Activated naive CD4-positive, alpha-beta T cell treated with anti-CD3 and anti-CD28 coated beads, Interleukin-2, amount 10 ng/mL, durations not matched to agents 7 days and 5 days (primary cell): ENCODE measurements at regions of chr11 and their contacts with region 1.

Region 1: DNA sequence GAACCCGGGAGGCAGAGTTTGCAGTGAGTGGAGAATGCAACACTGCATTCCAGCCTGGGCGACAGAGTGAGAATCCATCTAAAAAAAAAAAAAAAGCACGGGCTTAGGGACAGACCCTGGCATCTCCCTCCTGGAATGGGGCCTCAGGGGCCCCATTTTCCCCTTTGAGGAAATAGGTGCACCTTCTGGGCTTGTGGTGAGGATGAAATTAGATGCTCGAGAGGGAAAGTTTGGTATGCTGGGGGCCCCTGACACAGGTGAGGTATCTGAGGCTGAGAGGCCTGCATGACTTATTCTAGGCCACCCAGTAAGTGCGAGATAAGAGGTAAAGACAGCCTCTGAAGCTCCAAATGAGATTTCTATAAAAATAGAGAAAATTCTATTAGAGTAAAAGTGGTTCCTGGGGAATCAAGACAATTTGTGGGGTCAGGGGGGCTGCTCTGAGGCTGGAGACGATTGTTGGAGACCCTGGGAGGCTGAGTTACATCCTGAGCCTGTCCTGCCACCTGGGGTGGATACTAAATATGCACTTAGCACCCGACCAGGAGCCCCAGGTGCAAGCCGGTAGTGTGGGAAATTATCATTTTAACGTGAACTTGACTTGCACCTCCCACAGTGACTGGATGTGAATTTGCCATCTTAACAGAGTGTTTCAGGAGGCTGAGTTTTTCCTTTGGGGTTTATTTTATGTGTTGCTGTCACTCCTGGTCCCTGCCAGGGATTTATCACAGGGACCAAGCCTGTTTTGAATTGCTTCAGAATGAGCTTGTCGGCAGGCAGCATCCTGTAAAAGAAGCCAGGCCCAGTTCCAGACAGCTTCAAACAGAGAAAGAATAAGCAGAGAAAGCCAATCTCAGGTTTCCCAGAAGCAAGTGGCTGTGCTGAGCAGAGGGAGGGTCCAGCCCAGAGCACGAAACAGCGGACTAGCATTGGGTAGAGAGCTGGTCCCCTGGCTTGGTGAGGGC is 48.4 kb upstream of the TSKU start:
- DNase-seq: no peak
- H3K4me3 Mint-ChIP-seq: no peak overlapping the region
- H3K27ac Mint-ChIP-seq: no peak overlapping the region
- H3K4me1 Mint-ChIP-seq: peaks cover 6% of the 10 kb centered on the region
- H3K27me3 Mint-ChIP-seq: peaks cover 27% of the 10 kb centered on the region

Region 2: GRCh38 chr11:76670485-76671236 is 64.1 kb before region 1 on chr11 and contains the start of gene LRRC32:
- CTCF ChIA-PET with region 1: no interaction called
- DNase-seq: peak; percentile 39
- H3K4me3 Mint-ChIP-seq: peak within 1 kb of the TSS; percentile 59
- H3K27ac Mint-ChIP-seq: no peak within 1 kb of the TSS
- H3K4me1 Mint-ChIP-seq: peaks cover 29% of the 10 kb centered on the region
- H3K27me3 Mint-ChIP-seq: peaks cover 63% of the 10 kb centered on the region

Region 3: GRCh38 chr11:76799066-76799804 is 64.5 kb after region 1 on chr11:
- CTCF ChIA-PET with region 1: interaction called, 151 read pairs
- DNase-seq: peak; percentile 83
- H3K4me3 Mint-ChIP-seq: peak overlapping the region; percentile 18
- H3K27ac Mint-ChIP-seq: no peak overlapping the region
- H3K4me1 Mint-ChIP-seq: peaks cover 25% of the 10 kb centered on the region
- H3K27me3 Mint-ChIP-seq: peaks cover 49% of the 10 kb centered on the region

Region 4: DNA sequence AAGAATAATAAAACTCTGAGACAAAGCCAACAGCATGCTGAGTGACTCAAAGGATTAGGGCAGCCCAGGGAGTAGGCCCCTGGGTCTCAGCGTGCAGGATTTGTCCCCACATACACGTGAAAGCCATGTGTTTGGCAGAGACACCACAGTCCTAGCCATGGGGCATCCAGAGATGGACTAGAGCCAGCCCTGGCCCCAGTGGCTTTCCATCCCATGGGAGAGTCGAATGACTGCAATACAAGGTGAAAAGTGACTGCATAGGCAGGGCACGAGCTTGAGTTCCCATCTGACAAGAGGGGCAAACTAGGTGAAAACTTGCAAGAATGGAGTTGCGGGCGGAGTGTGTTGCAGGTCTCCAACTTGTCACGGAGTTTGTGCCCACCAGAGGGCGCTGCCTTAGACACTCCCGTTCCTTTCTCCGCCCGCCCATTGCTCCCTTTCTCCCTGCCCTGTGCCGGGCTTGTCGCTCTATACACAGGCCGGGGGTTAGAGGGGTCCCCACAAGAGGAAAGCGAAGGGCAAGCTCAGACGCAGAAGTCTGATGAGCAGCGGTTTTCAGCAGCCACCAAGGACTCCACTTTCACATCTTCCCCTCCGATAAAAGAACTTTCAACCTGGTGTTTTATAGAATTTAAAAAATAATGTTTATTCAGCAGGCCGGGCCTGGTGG is 72.6 kb after region 1 on chr11:
- CTCF ChIA-PET with region 1: interaction called, 151 read pairs
- DNase-seq: peak; percentile 81
- H3K4me3 Mint-ChIP-seq: no peak overlapping the region
- H3K27ac Mint-ChIP-seq: no peak overlapping the region
- H3K4me1 Mint-ChIP-seq: peaks cover 46% of the 10 kb centered on the region
- H3K27me3 Mint-ChIP-seq: peaks cover 39% of the 10 kb centered on the region

Region 5: DNA sequence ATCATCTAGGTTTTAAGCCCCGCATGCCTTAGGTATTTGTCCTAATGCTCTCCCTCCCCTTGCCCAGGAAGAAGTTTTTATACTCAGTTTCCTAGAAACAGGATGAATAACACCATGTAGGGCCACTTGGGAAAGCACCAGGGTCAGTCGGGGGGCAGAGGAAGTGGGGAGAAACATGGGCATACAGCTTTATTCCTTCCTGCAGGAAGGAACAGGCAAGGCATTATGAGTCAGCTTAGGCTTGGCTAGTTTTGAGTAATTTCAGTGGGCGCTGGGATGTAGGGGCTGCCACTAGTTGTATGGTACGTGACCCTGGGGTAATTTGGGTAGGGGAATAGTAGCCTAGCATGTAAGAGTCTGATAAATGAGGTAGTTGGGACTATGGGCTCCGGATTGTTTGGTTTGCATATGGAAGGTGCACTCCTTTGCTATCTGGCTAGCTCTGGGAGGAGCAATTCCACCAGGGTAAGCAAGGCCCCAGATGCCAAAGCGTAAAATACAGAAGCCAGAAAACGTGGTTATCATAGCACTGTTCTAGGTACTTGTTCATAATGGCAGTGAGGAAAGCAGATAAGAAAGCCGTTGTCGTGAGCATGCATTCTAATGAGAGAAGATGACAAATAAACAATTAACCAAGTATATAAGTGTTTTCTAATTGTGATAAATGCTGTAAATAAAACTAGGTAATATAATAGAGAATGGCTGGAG is 150.8 kb after region 1 on chr11:
- CTCF ChIA-PET with region 1: no interaction called
- DNase-seq: no peak
- H3K4me3 Mint-ChIP-seq: no peak overlapping the region
- H3K27ac Mint-ChIP-seq: peak overlapping the region; percentile 26
- H3K4me1 Mint-ChIP-seq: peaks cover 9% of the 10 kb centered on the region
- H3K27me3 Mint-ChIP-seq: no peaks in the 10 kb centered on the region

Region 6: DNA sequence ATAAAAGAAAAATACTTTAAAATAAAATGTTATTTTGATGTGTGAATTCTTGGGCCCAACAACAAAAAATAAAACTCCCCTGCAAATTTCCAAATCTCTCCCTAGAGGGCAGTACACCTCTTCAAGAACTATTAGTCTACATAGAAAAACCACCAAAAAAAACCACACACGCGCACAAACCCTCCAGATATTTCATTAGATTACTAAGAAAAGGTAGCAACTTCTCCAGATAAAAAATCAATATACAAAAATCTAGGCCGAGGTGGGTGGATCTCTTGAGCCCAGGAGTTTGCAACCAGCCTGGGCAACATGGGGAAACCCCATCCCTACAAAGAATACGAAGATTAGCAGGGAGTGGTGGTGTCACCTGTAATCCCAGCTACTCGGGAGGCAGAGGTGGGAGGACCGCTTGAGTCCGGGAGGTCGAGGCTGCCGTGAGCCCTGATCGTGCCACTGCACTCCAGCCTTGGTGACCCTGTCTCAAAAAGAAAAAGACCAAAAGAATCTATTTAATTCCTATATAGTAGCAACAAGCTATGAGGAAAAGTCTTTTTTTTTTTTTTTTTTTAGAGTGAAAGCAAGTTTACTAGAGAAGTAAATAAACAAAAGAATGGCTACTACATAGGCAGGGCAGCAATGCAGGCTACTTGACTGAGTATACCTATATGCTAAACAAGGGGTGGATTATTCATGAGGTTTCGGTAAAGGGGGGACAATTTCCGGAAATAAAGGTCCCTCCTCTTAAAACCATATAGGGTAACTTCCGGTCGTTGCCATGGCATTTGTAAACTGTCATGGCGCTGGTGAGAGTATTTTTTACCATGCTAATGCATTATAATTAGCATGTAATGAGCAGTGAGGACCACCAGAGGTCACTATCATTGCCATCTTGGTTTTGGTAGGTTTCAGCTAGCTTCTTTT is 312.5 kb after region 1 on chr11:
- CTCF ChIA-PET with region 1: interaction called, 12 read pairs
- DNase-seq: peak; percentile 86
- H3K4me3 Mint-ChIP-seq: peak overlapping the region; percentile 48
- H3K27ac Mint-ChIP-seq: peak overlapping the region; percentile 30
- H3K4me1 Mint-ChIP-seq: peaks cover 16% of the 10 kb centered on the region
- H3K27me3 Mint-ChIP-seq: peaks cover 22% of the 10 kb centered on the region